PC-9 (cell line): ENCODE measurements at regions of chr17 and their contacts with region 1.

Region 1: DNA sequence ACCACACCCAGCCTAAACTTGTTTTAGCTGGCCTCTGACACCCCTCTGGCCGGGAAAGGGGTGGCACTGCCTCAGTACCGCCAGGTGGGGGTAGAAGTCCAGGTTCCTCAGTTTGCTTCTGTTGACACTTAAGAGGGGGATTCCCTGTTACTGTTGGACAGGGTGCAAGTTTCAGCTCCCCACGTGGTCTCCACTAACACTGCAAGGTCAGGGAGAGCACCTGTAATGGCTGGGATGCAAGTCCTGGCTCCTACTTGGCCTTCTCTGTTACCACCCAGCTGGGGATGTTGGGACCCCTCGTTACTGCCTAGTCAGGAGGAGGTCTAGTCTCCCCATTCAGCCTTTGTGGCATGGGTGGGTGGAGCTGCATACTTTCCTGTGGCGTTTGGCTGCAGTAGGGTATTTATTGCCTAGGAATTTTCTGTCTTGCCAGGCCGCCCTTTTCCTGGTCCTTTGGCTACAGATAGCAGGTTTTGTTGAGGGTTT is 10.6 kb upstream of the MFAP4 start:
- DNase-seq: peak in 1 of 2 experiments; percentile 41
- H3K4me3 ChIP-seq: no peak overlapping the region
- H3K27ac ChIP-seq: peak overlapping the region; percentile 80
- H3K4me1 ChIP-seq: peaks cover 22% of the 10 kb centered on the region
- H3K27me3 ChIP-seq: no peaks in the 10 kb centered on the region
- CTCF ChIP-seq: no peak

Region 2: GRCh38 chr17:19386974-19387920 is 10.4 kb before region 1 on chr17 and contains the start of gene MFAP4:
- CTCF ChIA-PET with region 1: interaction called, 3 read pairs
- POLR2A ChIA-PET with region 1: interaction called, 11 read pairs
- intact Hi-C with region 1: no loop called
- DNase-seq: no peak
- H3K4me3 ChIP-seq: no peak within 1 kb of the TSS
- H3K27ac ChIP-seq: no peak within 1 kb of the TSS
- H3K4me1 ChIP-seq: peaks cover 15% of the 10 kb centered on the region
- H3K27me3 ChIP-seq: no peaks in the 10 kb centered on the region
- CTCF ChIP-seq: no peak
- total RNA-seq, gene MFAP4: not detected in 2 replicates

Region 3: DNA sequence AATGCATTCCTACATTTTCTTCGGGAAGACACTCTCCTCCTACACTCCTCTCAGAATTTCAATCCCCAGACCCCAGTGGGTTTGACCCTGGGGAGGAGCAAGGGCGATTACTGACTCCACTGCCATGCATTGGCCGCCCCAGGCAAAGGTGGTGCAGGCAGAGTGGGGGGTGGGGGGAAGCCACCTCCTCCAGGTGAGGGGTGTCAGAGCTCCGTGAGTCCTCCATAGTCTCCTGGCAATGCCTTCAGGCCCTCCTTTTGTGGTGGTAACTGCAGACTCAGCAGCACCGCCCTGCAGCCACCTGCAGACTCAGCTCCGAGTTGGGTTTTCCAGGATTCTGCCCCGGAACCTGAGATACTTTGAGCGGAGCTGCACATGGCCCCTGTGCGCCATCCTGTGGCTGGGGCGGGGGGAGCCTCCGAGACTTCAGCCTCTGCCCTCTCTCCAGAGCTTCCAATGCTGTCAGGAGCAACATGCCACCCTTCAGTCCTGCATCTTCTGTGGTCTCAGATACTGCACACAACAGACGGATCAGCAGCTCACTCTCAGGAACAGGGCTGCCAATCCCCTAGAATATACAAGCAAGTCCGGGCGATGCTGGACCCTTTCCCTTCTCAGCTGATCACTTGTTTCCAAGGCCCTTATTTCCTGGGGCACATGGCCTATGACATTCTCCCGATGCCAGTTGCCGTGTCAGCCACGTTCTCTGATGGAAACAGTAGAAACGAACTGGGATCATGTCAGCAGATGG is 321.2 kb after region 1 on chr17:
- CTCF ChIA-PET with region 1: no interaction called
- POLR2A ChIA-PET with region 1: interaction called, 11 read pairs
- intact Hi-C with region 1: no loop called
- DNase-seq: peak in 1 of 2 experiments; percentile 50
- H3K4me3 ChIP-seq: no peak overlapping the region
- H3K27ac ChIP-seq: peak overlapping the region; percentile 66
- H3K4me1 ChIP-seq: peaks cover 87% of the 10 kb centered on the region
- H3K27me3 ChIP-seq: no peaks in the 10 kb centered on the region
- CTCF ChIP-seq: peak; percentile 52